K562 (cell line): ENCODE measurements at regions of chr12 and their contacts with region 1.

Region 1: GRCh38 chr12:121712461-121713256 is at the start of gene TMEM120B:
- DNase-seq: peak; percentile 87 to 97 (median 94)
- ATAC-seq: peak; percentile 76
- H3K4me3 ChIP-seq: peak within 1 kb of the TSS; percentile 96
- H3K27ac ChIP-seq: peak within 1 kb of the TSS; percentile 78
- H3K4me1 ChIP-seq: peaks cover 30 to 33% of the 10 kb centered on the region in 2 experiments
- H3K27me3 ChIP-seq: no peaks in the 10 kb centered on the region
- CTCF ChIP-seq: no peak; a peak in 1 of 6 replicates
- EP300 ChIP-seq: no peak
- POLR2A ChIP-seq: peak; percentile 90
- RAD21 ChIP-seq: no peak
- polyA plus RNA-seq, gene TMEM120B: 1.7 to 3.8 TPM

Region 2: GRCh38 chr12:121287267-121287954 is 425.2 kb before region 1 on chr12:
- CTCF ChIA-PET with region 1: no interaction called
- POLR2A ChIA-PET with region 1: no interaction called
- in situ Hi-C with region 1: no loop called
- intact Hi-C with region 1: no loop called
- DNase-seq: no peak
- ATAC-seq: no peak
- H3K4me3 ChIP-seq: no peak overlapping the region
- H3K27ac ChIP-seq: no peak overlapping the region
- H3K4me1 ChIP-seq: peaks cover 12 to 20% of the 10 kb centered on the region in 2 experiments; a peak in 4 of 5 replicates
- H3K27me3 ChIP-seq: no peaks in the 10 kb centered on the region
- CTCF ChIP-seq: no peak
- EP300 ChIP-seq: no peak
- POLR2A ChIP-seq: no peak
- RAD21 ChIP-seq: no peak

Region 3: GRCh38 chr12:121345151-121345815 is 367.4 kb before region 1 on chr12:
- CTCF ChIA-PET with region 1: no interaction called
- POLR2A ChIA-PET with region 1: no interaction called
- in situ Hi-C with region 1: no loop called
- intact Hi-C with region 1: no loop called
- DNase-seq: no peak
- ATAC-seq: no peak
- H3K4me3 ChIP-seq: no peak overlapping the region
- H3K27ac ChIP-seq: no peak overlapping the region
- H3K4me1 ChIP-seq: peaks cover 0 to 3% of the 10 kb centered on the region in 2 experiments; a peak in 1 of 5 replicates
- H3K27me3 ChIP-seq: no peaks in the 10 kb centered on the region
- CTCF ChIP-seq: no peak
- EP300 ChIP-seq: no peak
- POLR2A ChIP-seq: no peak
- RAD21 ChIP-seq: no peak

Region 4: DNA sequence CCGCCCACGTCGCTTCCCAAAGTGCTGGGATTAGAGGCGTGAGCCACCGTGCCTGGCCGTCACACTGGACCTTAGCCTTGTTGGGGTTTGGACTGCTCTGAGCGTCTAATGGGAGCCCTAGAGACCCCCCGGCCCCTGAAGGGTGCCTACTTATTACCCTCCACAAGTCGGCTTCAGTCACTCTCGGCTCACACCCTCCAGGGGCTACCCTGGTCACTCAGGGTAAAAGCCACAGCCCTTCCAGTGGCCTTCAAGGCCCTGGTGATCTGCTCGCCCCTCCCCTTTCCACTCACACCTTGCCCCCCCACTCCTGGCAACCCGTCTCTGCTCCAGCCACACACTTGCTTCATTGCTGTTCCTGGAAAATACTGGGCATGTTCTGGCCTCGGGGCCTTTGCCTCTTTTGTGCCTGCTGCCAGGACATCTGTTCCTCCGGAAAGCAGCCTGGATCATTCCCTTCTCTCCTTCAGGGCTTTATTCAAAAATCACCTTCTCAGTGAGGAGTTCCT is 39.6 kb before region 1 on chr12:
- CTCF ChIA-PET with region 1: no interaction called
- POLR2A ChIA-PET with region 1: no interaction called
- in situ Hi-C with region 1: no loop called
- intact Hi-C with region 1: no loop called
- DNase-seq: peak in 2 of 4 experiments; percentile 27 to 31
- ATAC-seq: 0 out of 3 replicates have a peak, but pooled peaks have one; percentile 37
- H3K4me3 ChIP-seq: no peak overlapping the region
- H3K27ac ChIP-seq: no peak overlapping the region
- H3K4me1 ChIP-seq: peaks cover 2 to 24% of the 10 kb centered on the region in 2 experiments; a peak in 3 of 5 replicates
- H3K27me3 ChIP-seq: no peaks in the 10 kb centered on the region
- CTCF ChIP-seq: no peak
- EP300 ChIP-seq: no peak
- POLR2A ChIP-seq: no peak
- RAD21 ChIP-seq: no peak

Region 5: GRCh38 chr12:121738340-121738858 is 25.7 kb after region 1 on chr12:
- CTCF ChIA-PET with region 1: no interaction called
- POLR2A ChIA-PET with region 1: interaction called, 3 read pairs
- in situ Hi-C with region 1: no loop called
- intact Hi-C with region 1: loop called (anchors 2 kb)
- DNase-seq: peak; percentile 85 to 91 (median 89)
- ATAC-seq: peak; percentile 93
- H3K4me3 ChIP-seq: no peak overlapping the region
- H3K27ac ChIP-seq: peak overlapping the region; percentile 81
- H3K4me1 ChIP-seq: peaks cover 37 to 41% of the 10 kb centered on the region in 2 experiments
- H3K27me3 ChIP-seq: no peaks in the 10 kb centered on the region
- CTCF ChIP-seq: peak in 2 of 3 experiments; percentile 15 to 42; a peak in 2 of 6 replicates
- EP300 ChIP-seq: peak; percentile 95
- POLR2A ChIP-seq: no peak
- RAD21 ChIP-seq: peak; percentile 21 to 58

Region 6: DNA sequence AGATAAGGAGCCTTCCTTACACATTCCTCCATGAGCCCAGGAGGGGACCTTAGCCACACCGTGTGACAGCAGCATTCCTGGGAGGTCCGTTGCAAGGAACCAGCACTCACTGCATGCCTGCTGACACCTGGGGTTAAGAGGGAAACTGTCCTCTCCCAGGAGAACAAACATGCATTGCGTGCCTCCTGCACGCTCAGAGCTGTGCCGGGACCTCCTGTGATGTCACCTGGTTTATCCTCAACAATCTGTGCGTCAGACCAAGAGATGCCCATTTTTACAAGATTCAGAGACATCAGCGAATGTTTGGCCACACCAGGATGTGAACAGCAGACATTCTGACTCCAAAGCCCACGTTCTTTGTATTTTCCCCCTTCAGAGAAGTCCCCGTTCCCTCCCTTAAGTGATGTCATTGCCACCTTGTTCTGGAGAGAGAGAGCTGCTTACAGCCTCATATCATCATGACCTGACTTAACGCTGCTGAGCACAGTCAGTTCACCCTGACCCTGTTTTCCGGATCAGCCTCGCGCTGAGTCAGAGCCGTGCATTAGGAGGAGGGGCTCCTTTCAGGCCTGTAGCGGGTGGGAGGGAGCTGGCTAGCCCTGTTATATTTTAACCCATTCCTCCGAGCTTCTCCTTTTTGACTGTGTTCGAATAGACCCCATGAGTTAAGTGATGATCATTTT is 36.1 kb after region 1 on chr12:
- CTCF ChIA-PET with region 1: no interaction called
- POLR2A ChIA-PET with region 1: interaction called, 11 read pairs
- in situ Hi-C with region 1: no loop called
- intact Hi-C with region 1: no loop called
- DNase-seq: peak; percentile 84 to 95 (median 87)
- ATAC-seq: peak; percentile 100
- H3K4me3 ChIP-seq: no peak overlapping the region
- H3K27ac ChIP-seq: peak overlapping the region; percentile 95
- H3K4me1 ChIP-seq: peaks cover 14 to 22% of the 10 kb centered on the region in 2 experiments
- H3K27me3 ChIP-seq: no peaks in the 10 kb centered on the region
- CTCF ChIP-seq: no peak
- EP300 ChIP-seq: peak; percentile 79
- POLR2A ChIP-seq: no peak
- RAD21 ChIP-seq: no peak

Region 7: DNA sequence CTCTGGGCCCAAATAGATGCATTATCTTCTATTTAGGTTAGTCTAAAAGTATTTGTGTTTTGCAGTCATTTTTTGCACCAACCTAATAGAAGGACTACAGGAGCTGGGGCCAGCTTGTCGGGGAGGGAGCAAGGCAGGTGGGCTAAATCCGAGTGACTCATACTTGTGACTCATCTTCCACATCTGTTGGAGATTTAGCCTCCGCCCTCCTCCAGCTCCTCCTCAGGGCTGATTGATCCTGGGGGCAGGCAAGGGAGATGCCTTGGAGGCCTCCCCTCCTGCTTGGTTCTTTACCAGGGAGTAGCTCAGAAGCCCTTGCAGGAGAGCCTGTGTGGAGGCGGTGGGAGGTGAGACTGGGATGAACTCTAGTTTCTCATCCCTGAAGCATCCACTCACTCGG is 52.9 kb after region 1 on chr12:
- CTCF ChIA-PET with region 1: no interaction called
- POLR2A ChIA-PET with region 1: interaction called, 10 read pairs
- in situ Hi-C with region 1: no loop called
- intact Hi-C with region 1: no loop called
- DNase-seq: peak; percentile 47 to 70 (median 68)
- ATAC-seq: peak; percentile 38
- H3K4me3 ChIP-seq: no peak overlapping the region
- H3K27ac ChIP-seq: no peak overlapping the region
- H3K4me1 ChIP-seq: peaks cover 11 to 29% of the 10 kb centered on the region in 2 experiments; a peak in 4 of 5 replicates
- H3K27me3 ChIP-seq: no peaks in the 10 kb centered on the region
- CTCF ChIP-seq: no peak
- EP300 ChIP-seq: no peak; the same call in 1 of the 2 replicates
- POLR2A ChIP-seq: no peak
- RAD21 ChIP-seq: no peak

Region 8: DNA sequence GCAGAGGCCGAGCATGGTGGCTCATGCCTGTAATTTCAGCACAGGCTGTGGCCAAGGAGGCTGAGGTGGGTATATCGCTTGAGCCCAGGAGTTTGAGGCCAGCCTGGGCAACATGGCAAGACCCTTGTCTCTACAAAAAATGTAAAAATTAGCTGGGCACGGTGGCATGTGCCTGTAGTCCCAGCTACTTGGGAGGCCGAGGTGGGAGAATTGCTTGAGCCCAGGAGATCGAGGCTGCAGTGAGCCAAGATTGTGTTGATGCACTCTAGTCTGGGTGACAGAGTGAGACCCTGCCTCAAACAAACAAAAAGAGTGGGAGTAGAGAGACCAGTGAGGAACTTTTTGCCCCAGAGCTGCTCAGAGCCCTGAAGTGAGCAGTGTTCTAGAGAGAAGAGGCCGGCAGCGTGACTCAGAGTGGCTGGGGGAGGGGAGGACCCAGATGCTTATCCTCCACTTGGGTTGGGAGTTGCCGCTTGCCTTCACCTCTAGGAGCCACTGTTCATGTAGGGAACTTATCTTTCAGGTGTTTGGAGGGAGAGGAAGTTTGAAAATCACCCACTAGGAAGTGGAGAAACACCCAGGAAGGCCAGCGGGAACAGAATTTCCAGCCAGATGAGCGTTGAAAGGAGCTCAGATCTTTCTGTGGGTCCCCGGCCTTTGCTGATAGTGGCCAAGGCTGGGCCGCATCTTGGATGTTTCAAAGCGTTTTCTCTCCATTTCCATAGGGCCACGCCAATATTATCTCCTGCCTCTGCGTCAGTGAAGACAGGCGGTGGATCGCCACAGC is 221.1 kb after region 1 on chr12:
- CTCF ChIA-PET with region 1: no interaction called
- POLR2A ChIA-PET with region 1: no interaction called
- in situ Hi-C with region 1: no loop called
- intact Hi-C with region 1: no loop called
- DNase-seq: peak; percentile 93 to 96 (median 94)
- ATAC-seq: peak; percentile 98
- H3K4me3 ChIP-seq: peak overlapping the region; percentile 47
- H3K27ac ChIP-seq: peak overlapping the region; percentile 95
- H3K4me1 ChIP-seq: peaks cover 25 to 29% of the 10 kb centered on the region in 2 experiments; a peak in 4 of 5 replicates
- H3K27me3 ChIP-seq: no peaks in the 10 kb centered on the region
- CTCF ChIP-seq: peak; percentile 65 to 68 (median 66)
- EP300 ChIP-seq: peak; percentile 79
- POLR2A ChIP-seq: peak; percentile 80
- RAD21 ChIP-seq: peak; percentile 33 to 51; a peak in 3 of 4 replicates